Heart right ventricle (tissue), 16 donors: ENCODE measurements at regions of chr19 and their contacts with region 1.

Region 1: DNA sequence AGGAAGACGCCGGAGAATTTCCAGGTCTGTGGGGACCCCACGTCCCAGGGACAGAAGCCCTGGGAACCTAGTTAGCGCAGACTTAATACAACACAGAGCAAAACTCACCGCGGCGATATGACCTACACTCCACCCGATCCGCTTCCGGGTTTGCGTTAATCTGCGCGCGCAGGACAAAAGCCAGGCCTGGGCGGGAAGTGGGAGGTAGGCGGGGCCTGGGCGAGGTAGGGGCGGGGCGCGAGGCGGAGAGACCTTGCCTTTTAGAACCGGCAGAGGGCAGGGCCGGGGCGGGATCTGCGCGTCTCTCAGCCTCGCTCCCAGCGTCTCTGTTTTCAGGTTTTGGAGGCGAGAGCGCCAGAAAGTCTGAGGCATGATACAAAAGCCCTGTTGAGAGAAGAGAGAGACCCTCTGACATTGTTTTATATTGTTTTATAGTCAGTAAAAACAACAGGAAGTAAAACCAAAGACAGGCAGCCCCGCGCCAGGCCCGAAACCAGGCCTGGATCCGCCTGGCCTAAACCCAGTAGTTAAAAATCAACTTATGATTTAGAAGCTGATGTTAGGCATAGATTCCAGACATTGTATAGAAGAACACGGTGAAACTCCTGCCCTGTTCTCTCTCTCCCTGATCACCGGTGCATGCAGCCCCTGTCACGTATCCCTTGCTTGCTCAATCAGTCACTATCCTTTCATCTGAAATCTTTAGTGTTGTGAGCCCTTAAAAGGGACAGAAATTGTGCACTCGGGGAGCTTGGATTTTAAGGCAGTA is at the start of gene ZNF611:
- DNase-seq: peak; percentile 98 to 99
- ATAC-seq: peak; percentile 98 to 100 (median 99)
- H3K4me3 ChIP-seq: peak within 1 kb of the TSS; percentile 64 to 92 (median 81)
- H3K27ac ChIP-seq: peak within 1 kb of the TSS; percentile 68 to 97 (median 92)
- H3K4me1 ChIP-seq: peaks cover 0 to 28% (median 13%) of the 10 kb centered on the region in 9 donors
- H3K27me3 ChIP-seq: no peaks in the 10 kb centered on the region
- CTCF ChIP-seq: peak; percentile 48 to 86 (median 74)
- total RNA-seq, gene ZNF611: 7.0 to 9.8 (median 7.7) TPM

Region 2: GRCh38 chr19:52527134-52527955 is 207.7 kb before region 1 on chr19 and contains the start of gene ZNF808:
- intact Hi-C with region 1: loop called in 1 of 10 experiments (anchors 1 kb)
- DNase-seq: peak; percentile 97 to 99
- ATAC-seq: peak; percentile 97 to 99 (median 98)
- H3K4me3 ChIP-seq: peak within 1 kb of the TSS; percentile 52 to 94 (median 78)
- H3K27ac ChIP-seq: peak within 1 kb of the TSS; percentile 81 to 99 (median 96)
- H3K4me1 ChIP-seq: peaks cover 3 to 28% (median 17%) of the 10 kb centered on the region in 9 donors
- H3K27me3 ChIP-seq: no peaks in the 10 kb centered on the region
- CTCF ChIP-seq: peak; percentile 44 to 80 (median 62)
- total RNA-seq, gene ZNF808: 18.0 to 44.0 (median 32.9) TPM

Region 3: DNA sequence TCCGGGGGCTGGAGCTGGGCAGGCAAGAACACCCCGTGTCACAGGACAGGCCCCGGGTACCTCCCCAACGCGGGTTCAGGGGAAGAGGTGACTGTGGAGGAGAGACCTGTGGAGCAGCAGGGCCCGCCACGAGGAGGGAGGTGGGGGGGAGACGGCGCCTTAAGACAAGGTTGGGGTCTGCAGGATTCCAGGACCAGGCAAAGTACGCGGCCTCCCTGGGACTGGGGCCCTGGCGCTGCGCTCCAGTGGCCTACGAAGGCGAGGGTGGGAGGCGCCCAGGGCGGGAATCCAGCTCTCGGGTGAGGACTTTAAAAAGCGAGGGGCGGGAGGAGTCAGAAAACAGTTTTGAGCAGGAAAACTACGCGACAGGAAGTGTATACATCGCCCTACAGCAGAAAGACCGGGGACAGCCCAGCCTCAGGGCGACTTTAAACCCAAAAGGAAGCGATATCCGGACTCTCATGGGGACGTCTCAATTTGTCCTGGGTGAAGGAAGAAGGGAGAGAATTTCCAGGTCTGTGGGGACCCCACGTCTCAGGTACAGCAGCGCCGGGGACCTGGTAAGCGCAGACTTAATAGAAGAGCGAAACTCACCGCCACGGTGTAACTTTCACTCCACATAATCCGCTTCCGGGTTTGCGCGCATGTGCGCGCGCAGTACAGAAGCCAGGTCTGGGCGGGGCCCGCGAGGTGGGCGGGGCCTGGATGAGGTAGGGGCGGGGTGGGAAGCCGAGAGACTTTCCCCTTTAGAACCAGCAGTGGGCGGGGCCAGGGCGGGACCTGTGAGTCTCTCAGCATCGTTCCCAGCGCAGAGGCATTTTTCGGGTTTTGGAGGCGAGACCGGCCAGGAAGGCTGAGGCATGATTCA is 97.1 kb before region 1 on chr19 and contains the start of gene ZNF83:
- intact Hi-C with region 1: loop called in 1 of 10 experiments (anchors 10 kb)
- DNase-seq: peak; percentile 98
- ATAC-seq: peak; percentile 99 to 100 (median 99)
- H3K4me3 ChIP-seq: peak within 1 kb of the TSS; percentile 51 to 91 (median 74)
- H3K27ac ChIP-seq: peak within 1 kb of the TSS; percentile 66 to 94 (median 86)
- H3K4me1 ChIP-seq: peaks cover 0 to 23% (median 14%) of the 10 kb centered on the region in 9 donors
- H3K27me3 ChIP-seq: no peaks in the 10 kb centered on the region
- CTCF ChIP-seq: no peak
- total RNA-seq, gene ZNF83: 10.3 to 21.4 (median 16.7) TPM